Activated T-helper 2 cell treated with anti-CD3 and anti-CD28 coated beads, Interferon-gamma antibody, Interleukin-2, Interleukin-4, amounts not matched to agents 10 μg/mL and 5 μg/mL and 100 μg/mL, durations not matched to agents 14 hours and 24 hours and 36 hours (primary cell): ENCODE measurements at regions of chr2 and their contacts with region 1.

Region 1: GRCh38 chr2:56183643-56184499 is at the start of gene CCDC85A:
- DNase-seq: peak; percentile 55
- H3K4me3 Mint-ChIP-seq: no peak within 1 kb of the TSS
- H3K27ac Mint-ChIP-seq: no peak within 1 kb of the TSS
- H3K4me1 Mint-ChIP-seq: no peaks in the 10 kb centered on the region
- H3K27me3 Mint-ChIP-seq: peaks cover 53% of the 10 kb centered on the region
- total RNA-seq, gene CCDC85A: not detected in 2 replicates

Region 2: DNA sequence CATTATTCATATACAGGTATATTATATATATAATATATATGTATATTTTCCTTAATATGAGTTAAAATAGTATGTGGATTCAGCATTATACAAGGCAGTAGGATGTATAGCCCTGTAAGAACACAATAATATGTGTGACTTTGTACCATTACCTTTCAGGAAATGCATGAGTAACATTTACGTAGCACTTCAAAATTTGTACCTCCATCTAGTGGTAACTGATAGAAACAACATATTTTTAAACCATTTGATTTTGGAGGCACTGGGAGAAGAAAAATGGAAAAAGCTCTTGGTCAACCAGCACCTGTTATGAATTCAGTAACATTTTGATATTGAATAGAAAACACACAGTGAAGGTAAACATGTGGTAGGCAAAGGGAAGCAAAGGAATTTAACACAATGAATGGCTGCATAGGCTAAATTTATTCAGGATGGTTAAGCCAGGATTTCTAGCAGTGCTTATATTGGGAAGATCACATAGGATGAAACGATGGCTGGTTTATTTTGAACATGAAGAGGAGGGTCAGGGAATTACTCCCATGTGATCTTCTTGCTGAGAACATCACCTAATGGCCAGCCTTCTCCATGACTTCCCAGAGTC is 565.4 kb after region 1 on chr2:
- intact Hi-C with region 1: loop called (anchors 10 kb)
- DNase-seq: no peak
- H3K4me3 Mint-ChIP-seq: no peak overlapping the region
- H3K27ac Mint-ChIP-seq: no peak overlapping the region
- H3K4me1 Mint-ChIP-seq: no peaks in the 10 kb centered on the region
- H3K27me3 Mint-ChIP-seq: no peaks in the 10 kb centered on the region

Region 3: DNA sequence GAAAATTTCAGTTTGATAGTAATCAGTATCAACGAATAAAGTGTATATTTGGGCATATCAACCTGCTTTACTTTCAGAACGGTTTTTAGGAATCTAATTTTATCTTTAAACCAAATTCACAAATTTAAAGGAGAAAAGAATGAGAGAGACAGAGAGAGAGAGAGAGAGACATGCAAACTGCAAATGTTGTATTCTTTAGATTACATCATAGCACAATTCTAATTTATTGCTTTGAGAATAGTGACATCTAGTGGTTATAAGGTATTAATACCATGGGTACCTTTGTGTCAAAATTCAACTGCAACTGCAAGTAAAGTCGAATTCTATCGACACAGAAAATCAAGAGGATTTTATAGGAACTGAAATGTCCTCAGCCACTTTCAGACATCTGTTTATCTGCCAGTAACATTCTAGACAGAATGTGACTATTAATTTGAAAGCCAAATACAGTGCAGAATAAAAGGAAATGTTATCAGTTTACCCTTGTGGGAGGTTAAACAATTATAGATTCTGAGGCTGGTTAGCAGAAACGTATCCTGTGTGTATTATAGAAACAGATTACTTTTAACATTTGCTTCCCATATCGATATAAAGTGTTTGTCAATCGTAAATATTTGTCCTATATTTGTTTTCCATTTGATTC is 1332.9 kb after region 1 on chr2:
- intact Hi-C with region 1: loop called (anchors 2 kb)
- DNase-seq: no peak
- H3K4me3 Mint-ChIP-seq: no peak overlapping the region
- H3K27ac Mint-ChIP-seq: no peak overlapping the region
- H3K4me1 Mint-ChIP-seq: no peaks in the 10 kb centered on the region
- H3K27me3 Mint-ChIP-seq: no peaks in the 10 kb centered on the region